PC-3 (cell line): ENCODE measurements at regions of chr2 and their contacts with region 1.

Region 1: DNA sequence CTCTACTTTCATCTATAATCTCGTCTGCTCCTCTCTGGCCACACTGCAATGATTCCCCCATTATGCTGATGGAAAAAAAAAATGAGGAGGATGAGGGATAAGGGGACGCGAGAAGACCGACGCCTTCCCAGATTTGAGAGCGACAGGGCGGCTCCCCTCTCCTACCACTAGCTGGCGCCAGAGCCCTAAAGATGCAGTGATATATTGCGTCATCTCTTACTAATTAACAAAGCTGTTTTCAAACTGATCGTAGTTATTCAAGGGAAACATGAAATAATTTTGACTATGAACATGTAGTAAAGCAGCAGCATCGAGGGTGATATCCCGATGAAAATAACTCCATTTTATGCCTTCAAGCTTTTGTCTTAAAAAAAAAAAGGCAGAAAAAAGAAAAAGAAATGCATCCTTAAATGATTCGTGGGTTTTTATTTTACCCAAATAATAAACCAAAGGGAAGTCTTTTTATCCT is 48.0 kb upstream of the HNRNPA3 start:
- DNase-seq: peak; percentile 83
- ATAC-seq: peak; percentile 51
- H3K4me3 ChIP-seq: peak overlapping the region; percentile 63
- H3K27ac ChIP-seq: no peak overlapping the region
- H3K4me1 ChIP-seq: peaks cover 40% of the 10 kb centered on the region
- H3K27me3 ChIP-seq: no peaks in the 10 kb centered on the region
- CTCF ChIP-seq: peak; percentile 99

Region 2: GRCh38 chr2:176852667-176853066 is 312.0 kb before region 1 on chr2:
- CTCF ChIA-PET with region 1: no interaction called
- POLR2A ChIA-PET with region 1: no interaction called
- intact Hi-C with region 1: no loop called
- DNase-seq: no peak
- ATAC-seq: no peak
- H3K4me3 ChIP-seq: no peak overlapping the region
- H3K27ac ChIP-seq: no peak overlapping the region
- H3K4me1 ChIP-seq: no peaks in the 10 kb centered on the region
- H3K27me3 ChIP-seq: peaks cover 25% of the 10 kb centered on the region; the same call in 1 of the 2 replicates
- CTCF ChIP-seq: no peak

Region 3: DNA sequence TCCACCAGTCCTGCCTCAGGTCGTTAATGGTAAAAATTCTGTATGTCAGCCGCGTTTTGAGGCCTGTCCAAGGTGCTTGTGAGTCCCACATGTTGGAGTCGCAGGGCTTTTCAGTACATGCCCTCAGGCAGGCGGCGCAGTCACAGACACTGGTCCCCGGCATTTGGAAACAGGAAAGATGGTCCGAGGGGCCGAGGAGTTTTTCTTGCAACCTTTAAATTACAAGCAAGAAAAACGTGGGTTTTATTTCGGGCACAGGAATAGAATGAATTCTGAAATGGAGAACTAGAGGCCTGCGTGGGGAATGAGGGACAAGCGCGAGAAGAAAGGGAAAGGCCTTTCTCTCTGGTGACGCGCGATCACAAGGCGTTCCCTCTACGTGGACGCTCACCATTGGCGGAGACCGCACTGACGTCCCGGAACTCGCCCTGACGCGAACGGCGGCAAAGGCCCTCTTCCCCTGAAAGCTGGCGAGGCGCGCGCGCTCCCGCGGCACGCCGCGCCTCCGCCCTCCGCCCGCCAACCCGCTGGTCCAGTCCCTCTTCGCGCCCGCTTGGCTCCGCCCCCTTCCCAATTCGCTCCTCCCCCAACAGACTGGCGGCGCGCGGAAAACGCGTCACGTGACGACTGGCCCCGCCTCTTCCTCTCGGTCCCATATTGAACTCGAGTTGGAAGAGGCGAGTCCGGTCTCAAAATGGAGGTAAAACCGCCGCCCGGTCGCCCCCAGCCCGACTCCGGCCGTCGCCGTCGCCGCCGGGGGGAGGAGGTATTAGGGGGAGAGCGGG is 47.7 kb after region 1 on chr2 and contains the start of gene HNRNPA3:
- CTCF ChIA-PET with region 1: no interaction called
- POLR2A ChIA-PET with region 1: no interaction called
- intact Hi-C with region 1: loop called (anchors 1 kb)
- DNase-seq: peak; percentile 99
- ATAC-seq: peak; percentile 86
- H3K4me3 ChIP-seq: peak within 1 kb of the TSS; percentile 92
- H3K27ac ChIP-seq: peak within 1 kb of the TSS; percentile 88
- H3K4me1 ChIP-seq: peaks cover 16% of the 10 kb centered on the region
- H3K27me3 ChIP-seq: no peaks in the 10 kb centered on the region
- CTCF ChIP-seq: no peak; the same call in 1 of the 2 replicates
- total RNA-seq, gene HNRNPA3: 50.3 and 90.2 TPM in 2 replicates

Region 4: GRCh38 chr2:177296040-177296439 is 131.4 kb after region 1 on chr2:
- CTCF ChIA-PET with region 1: interaction called, 11 read pairs
- POLR2A ChIA-PET with region 1: no interaction called
- intact Hi-C with region 1: loop called (anchors 1 kb)
- DNase-seq: peak; percentile 57
- ATAC-seq: peak; percentile 65
- H3K4me3 ChIP-seq: no peak overlapping the region
- H3K27ac ChIP-seq: no peak overlapping the region
- H3K4me1 ChIP-seq: no peaks in the 10 kb centered on the region
- H3K27me3 ChIP-seq: no peaks in the 10 kb centered on the region
- CTCF ChIP-seq: peak; percentile 62

Region 5: DNA sequence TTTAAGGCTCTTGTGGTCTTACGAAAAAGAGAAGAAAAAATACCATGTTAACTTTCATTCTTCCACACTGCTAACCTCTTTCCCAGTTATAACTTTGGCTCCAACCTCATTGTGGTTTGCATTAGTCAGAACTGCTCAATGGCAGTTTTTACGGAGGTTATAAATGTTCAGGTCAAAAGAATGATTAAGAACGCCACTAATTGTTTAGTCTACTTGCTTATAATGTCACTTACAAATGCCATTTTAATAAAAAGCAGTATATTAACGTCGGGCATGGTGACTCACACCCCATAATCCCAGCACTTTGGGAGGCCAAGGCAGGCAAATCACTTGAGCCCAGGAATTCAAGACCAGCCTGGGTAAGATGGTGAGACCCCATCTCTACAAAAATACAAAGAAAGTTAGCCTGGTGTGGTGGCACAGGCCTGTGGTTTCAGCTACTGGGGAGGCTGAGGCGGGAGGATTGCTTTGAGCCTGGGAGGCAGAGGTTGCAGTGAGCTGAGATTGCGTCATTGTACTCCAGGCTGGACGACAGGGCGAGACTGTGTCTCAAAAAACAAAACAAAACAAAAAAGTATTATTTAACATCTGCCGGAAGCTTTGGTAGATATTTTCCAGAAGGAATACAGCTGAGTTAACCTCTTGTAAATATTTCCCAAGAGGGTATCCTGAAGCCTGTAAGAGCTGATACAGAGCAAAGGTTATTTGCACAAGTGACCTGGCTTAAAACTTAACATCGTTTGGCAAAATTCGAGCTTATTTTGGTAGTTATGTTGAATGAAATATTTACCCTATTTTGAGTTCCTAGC is 233.1 kb after region 1 on chr2:
- CTCF ChIA-PET with region 1: no interaction called
- POLR2A ChIA-PET with region 1: no interaction called
- intact Hi-C with region 1: loop called (anchors 5 kb)
- DNase-seq: peak; percentile 86
- ATAC-seq: peak; percentile 53
- H3K4me3 ChIP-seq: peak overlapping the region; percentile 54
- H3K27ac ChIP-seq: peak overlapping the region; percentile 99
- H3K4me1 ChIP-seq: peaks cover 61% of the 10 kb centered on the region
- H3K27me3 ChIP-seq: no peaks in the 10 kb centered on the region
- CTCF ChIP-seq: no peak

Region 6: DNA sequence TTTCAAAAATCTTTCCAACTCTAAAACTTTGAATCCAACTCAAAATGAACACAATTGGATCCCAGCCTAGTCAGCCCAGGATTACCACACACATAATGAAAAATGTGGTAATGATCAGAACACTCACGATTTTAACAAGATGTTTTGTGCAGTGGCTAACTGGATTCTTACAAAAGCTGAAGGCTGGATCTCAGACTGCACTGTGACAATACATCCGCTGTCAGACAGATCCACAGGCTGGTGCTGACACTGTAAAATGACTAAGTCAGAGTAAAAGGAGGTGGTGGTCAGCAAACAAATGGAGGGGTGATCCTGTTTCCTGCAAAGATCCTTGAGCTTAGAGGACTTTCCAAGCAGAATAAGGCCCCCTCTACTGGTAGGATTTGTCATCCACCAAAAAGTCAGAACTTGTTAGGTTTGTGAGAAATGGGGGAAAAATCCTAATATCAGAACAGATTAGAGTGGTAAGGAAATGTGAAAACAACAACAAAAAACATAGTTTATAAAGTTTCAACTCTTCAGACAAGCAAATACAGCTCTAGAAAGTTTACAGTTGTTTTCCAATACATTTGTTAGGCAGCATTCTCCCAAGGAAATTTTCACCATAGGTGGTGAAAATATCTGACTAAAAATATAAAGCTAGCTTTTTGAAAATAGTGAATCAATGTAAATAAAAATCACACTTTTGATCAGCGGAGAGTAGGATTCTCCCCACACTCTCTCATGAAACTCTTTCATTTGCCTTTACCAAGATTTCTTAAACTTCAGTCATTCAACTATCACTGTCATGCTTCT is 439.9 kb after region 1 on chr2:
- CTCF ChIA-PET with region 1: no interaction called
- POLR2A ChIA-PET with region 1: no interaction called
- intact Hi-C with region 1: loop called (anchors 5 kb)
- DNase-seq: peak; percentile 76
- ATAC-seq: peak; percentile 96
- H3K4me3 ChIP-seq: no peak overlapping the region
- H3K27ac ChIP-seq: no peak overlapping the region
- H3K4me1 ChIP-seq: peaks cover 4% of the 10 kb centered on the region; the same call in 1 of the 2 replicates
- H3K27me3 ChIP-seq: no peaks in the 10 kb centered on the region
- CTCF ChIP-seq: peak; percentile 87